HEK293T (cell line): ENCODE measurements at regions of chr22 and their contacts with region 1.

Region 1: DNA sequence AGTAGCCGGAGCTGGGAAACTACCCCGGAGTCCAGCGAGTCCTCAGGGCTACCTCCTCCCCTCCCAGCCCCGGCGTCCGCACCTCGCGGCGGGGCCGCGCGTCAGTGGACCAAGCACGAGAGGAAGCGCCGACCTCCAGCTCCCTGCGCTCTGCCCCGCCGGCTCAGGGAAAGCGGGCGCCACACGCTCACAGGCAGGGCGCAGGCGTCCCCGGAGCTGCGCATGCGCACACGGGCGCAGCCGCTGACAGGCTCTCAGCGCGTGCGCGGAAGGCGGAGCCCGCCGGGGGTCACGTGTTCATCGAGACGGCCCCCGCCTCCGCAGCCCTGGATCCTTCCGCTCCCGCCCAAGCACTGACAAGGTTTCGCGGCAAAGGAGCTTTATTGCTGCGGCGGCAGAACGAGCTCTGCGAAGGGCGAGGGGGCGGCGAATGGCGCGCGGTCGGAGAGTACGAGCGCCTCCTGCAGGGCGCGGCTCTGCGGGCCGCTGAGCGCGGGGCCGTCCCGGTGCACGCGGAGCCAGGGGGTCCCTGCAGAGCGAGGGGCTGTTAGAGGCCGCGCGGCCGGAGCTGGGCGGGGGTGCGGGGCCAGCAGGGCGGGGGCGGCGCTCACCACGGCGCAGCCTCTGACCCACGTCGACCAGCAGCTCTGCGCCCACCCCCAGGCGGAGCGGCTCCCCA is at the start of gene SCO2:
- DNase-seq: peak; percentile 99

Region 2: DNA sequence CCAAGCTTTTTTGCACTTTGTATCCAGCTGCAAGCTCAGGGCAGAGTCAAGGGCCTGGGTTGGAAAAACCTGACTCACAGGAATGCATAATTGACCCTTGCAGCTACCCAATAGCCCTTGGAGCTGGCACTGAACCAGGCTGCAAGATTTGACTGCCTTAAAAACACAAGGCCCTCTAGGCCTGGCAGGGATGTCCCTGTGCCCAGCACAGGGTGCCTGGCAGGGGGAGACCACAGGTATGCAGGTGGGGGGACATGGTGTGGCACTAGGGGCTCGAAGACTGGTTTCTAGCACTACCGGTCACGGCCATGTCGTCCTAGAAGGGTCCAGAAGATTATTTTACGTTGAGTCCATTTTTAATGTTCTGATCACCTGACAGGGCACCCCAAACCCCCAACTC is 80.9 kb before region 1 on chr22:
- CTCF ChIA-PET with region 1: no interaction called
- POLR2A ChIA-PET with region 1: no interaction called
- DNase-seq: no peak

Region 3: DNA sequence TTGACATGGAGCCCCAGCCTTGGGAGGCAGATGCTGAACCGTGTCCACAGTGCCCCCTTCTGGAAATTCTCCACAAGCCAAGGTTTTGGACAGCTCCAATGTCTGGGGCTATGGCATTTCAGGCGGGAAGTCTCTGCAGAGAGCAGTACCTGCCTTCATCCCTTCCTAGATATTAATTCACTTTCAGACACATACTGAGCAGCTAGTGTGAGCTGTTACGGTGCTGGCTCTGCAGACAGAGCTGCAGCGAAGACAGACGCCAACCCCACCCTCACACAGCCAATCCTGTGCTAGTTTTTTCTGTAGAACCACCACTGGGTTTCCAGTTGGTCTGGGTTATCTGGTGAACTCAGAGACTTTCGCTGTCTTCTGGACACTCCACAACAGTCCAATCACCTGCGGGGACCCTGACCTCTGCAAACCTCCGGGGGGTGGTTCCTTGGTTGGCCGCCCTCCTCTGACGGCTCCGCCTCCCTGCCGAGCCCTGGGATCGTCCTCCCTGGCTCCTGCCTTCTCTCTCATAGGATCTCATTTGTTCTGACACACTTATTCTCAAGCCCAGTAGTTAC is 27.1 kb before region 1 on chr22:
- CTCF ChIA-PET with region 1: interaction called, 10 read pairs
- POLR2A ChIA-PET with region 1: interaction called, 9 read pairs
- DNase-seq: peak; percentile 77

Region 4: GRCh38 chr22:50537765-50538164 is 12.2 kb after region 1 on chr22:
- CTCF ChIA-PET with region 1: interaction called, 11 read pairs
- POLR2A ChIA-PET with region 1: interaction called, 49 read pairs
- DNase-seq: no peak

Region 5: GRCh38 chr22:50556703-50557102 is 31.2 kb after region 1 on chr22:
- CTCF ChIA-PET with region 1: interaction called, 3 read pairs
- POLR2A ChIA-PET with region 1: interaction called, 14 read pairs
- DNase-seq: no peak

Region 6: DNA sequence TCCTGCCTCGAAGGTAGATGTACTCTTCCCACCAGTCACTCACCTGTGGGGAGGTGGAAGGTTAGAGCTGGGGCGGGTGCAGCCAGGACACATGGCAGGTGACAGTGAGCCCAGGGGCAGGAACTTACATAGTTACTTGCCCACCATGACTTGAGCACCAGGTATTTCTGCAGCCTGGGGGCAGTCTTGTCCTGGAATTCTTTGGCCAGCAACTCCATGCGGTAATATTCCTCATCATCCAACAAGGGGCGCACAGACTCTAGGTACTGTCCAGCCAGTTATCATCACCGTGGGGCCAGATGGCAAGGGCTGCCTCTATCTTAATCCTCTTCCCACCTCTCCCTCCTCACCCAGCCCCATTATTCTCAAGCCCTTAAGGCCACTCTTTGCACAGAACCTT is 50.5 kb after region 1 on chr22:
- CTCF ChIA-PET with region 1: interaction called, 3 read pairs
- POLR2A ChIA-PET with region 1: interaction called, 14 read pairs
- DNase-seq: peak; percentile 54

Region 7: GRCh38 chr22:50620593-50621355 is 95.2 kb after region 1 on chr22:
- CTCF ChIA-PET with region 1: interaction called, 7 read pairs
- POLR2A ChIA-PET with region 1: interaction called, 11 read pairs
- DNase-seq: peak; percentile 77